ENCODE measurements at regions of chr19 and their contacts with region 1.

Region 1: DNA sequence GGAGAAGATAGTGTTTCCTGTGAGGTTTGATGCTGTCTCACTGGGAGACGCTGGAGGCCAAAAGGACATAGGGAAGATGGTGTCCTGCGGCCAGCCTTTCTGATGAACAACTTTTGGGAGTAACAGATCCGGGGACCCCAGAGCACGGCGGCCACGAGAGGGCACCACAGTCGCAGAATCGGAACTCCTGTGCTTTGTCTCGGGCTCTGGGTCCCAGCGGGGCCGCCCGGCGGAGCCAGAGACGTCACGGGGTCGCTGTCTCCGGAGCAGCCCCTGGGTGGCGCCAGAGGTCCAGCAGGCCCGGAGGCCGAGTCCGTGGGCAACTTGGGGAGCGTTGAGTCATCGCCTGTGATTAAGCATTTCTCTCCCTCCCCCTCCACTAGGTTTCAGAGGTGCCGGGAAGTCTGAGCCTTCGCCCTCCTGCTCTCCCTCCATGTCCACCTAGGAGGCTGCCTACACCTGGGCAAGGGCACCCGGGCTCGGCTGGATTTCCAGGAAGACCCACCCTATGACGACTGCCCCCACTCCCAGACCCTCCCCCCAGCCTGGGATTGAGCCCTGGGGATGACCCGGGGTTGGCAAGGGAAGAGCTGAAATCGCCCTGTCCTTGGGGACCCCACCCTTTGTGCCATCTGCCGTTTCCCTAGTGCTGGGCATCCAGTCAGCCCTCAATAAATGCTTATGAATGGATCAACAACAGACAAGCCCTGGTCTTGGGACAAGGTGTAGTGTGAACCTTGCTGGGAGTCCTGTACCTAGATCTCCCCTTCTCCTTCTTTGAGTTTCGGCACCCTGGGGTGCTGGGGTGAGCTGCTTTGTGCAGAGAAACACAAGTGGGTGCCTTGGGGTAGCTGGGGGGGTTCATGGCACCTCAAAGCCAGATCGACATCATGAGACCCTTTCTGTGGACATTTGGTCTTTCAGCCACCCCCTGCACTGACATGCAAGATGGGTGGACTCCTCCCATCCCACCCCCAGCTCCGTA is 3.4 kb downstream of the NANOS3 start:
- DNase-seq: peak; percentile 96 to 98 (median 97)
- ATAC-seq: peak; percentile 98 to 100 (median 98)
- H3K4me3 ChIP-seq: peak overlapping the region in 2 of 3 donors; percentile 9 to 40
- H3K27ac ChIP-seq: peak overlapping the region; percentile 14 to 75 (median 47)
- H3K4me1 ChIP-seq: peaks cover 0 to 10% (median 3%) of the 10 kb centered on the region in 4 donors
- H3K27me3 ChIP-seq: no peaks in the 10 kb centered on the region
- CTCF ChIP-seq: peak; percentile 99 to 100 (median 100)
- POLR2A ChIP-seq: peak; percentile 33

Region 2: DNA sequence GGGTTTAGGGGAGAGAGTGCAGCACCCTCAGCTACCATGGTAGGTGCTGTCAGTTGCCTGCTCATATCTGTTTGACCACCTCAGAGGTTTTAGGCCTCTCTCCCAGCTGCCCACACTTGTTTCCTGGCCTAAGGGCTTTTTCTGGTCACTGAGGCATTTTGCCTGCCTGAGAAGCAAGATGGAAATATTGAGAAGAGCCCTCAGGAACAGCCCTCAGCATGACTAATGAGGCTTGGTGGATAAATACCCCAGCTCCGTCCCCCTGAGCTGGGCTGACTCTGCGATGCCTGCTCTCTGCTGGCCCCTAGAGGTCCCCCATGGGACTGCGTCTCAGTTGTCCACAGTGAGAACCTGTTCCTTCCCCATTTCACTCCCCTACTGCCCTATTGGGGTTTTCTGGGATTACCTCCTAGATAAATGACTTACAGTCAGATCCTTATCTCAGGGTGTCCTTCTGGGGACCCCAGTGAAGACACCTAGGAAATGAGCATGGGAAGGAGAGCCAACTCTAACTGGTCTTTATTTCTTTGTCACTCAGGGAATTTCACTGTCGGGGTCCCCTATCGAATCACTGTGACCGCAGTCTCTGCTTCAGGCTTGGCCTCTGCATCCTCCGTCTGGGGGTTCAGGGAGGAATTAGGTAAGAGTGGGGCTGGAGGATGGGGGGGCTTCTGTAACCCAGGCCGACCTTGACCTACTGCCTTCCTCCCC is 168.2 kb after region 1 on chr19:
- intact Hi-C with region 1: loop called (anchors 10 kb)
- DNase-seq: peak in 2 of 3 donors; percentile 47 to 62
- ATAC-seq: peak; percentile 81 to 92 (median 86)
- H3K4me3 ChIP-seq: no peak overlapping the region
- H3K27ac ChIP-seq: no peak overlapping the region
- H3K4me1 ChIP-seq: no peaks in the 10 kb centered on the region
- H3K27me3 ChIP-seq: no peaks in the 10 kb centered on the region
- CTCF ChIP-seq: peak; percentile 58 to 93 (median 84)
- POLR2A ChIP-seq: no peak

Region 3: DNA sequence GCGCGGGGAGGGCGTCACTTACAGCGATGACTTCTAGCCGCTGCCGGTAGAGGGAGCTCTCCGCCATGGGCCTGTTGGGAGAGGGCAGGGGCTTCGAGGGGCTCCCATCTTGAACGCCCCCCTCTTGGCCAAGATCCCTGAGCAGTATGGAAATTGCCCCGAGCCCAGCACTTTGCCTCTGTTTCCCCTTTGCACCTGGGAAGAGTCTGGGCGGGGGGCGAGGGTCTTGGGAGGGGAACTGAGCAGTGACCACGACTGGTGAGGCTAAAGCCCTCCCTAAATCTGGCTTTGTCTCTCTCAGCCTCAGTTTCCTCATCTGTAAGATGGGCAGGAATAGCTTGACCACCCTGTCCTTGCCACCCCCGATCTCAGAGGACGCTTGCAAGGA is 178.7 kb after region 1 on chr19:
- intact Hi-C with region 1: loop called in 1 of 2 experiments (anchors 10 kb)
- DNase-seq: no peak
- ATAC-seq: no peak
- H3K4me3 ChIP-seq: no peak overlapping the region
- H3K27ac ChIP-seq: no peak overlapping the region
- H3K4me1 ChIP-seq: peaks cover 0 to 27% (median 9%) of the 10 kb centered on the region in 4 donors
- H3K27me3 ChIP-seq: no peaks in the 10 kb centered on the region
- CTCF ChIP-seq: peak in 3 of 4 donors; percentile 25 to 44 (median 28)
- POLR2A ChIP-seq: no peak

Measured in right lobe of liver (tissue), 6 donors.